Activated B cell treated with CpG ODN at 0.5 μM for 24 hours (primary cell): ENCODE measurements at regions of chr3 and their contacts with region 1.

Region 1: DNA sequence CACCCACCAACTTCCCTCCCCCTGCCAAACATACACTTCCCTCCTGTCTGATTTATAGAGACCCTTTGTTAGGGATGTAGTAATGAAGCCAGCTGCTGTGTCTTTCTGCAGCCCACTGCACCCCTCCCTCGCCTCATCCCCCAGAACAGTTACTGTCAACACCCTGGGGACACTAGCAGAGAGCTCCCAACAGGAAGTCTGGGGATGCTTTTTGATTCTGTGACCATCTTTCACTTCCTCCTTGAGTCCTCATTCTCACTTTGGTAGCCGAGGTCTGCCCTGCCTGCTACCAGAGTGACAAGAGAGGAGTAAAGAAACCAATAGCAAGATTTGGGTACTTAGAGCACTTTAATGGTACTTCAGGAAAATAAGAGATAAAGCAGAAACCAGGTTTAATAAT is 201.6 kb downstream of the SATB1 start:
- DNase-seq: peak; percentile 44
- ATAC-seq: peak; percentile 95
- H3K4me3 Mint-ChIP-seq: peak overlapping the region; percentile 73
- H3K27ac Mint-ChIP-seq: peak overlapping the region; percentile 83
- H3K4me1 Mint-ChIP-seq: peaks cover 75% of the 10 kb centered on the region
- H3K27me3 Mint-ChIP-seq: no peaks in the 10 kb centered on the region
- CTCF ChIP-seq: no peak

Region 2: GRCh38 chr3:18027161-18027939 is 196.2 kb before region 1 on chr3:
- CTCF ChIA-PET with region 1: no interaction called
- POLR2A ChIA-PET with region 1: no interaction called
- intact Hi-C with region 1: no loop called
- DNase-seq: no peak
- ATAC-seq: no peak
- H3K4me3 Mint-ChIP-seq: no peak overlapping the region
- H3K27ac Mint-ChIP-seq: no peak overlapping the region
- H3K4me1 Mint-ChIP-seq: peaks cover 34% of the 10 kb centered on the region
- H3K27me3 Mint-ChIP-seq: peaks cover 4% of the 10 kb centered on the region
- CTCF ChIP-seq: no peak

Region 3: GRCh38 chr3:18127174-18127858 is 96.3 kb before region 1 on chr3:
- CTCF ChIA-PET with region 1: no interaction called
- POLR2A ChIA-PET with region 1: interaction called, 5 read pairs
- intact Hi-C with region 1: loop called (anchors 1 kb)
- DNase-seq: peak; percentile 25
- ATAC-seq: peak; percentile 95
- H3K4me3 Mint-ChIP-seq: peak overlapping the region; percentile 51
- H3K27ac Mint-ChIP-seq: peak overlapping the region; percentile 67
- H3K4me1 Mint-ChIP-seq: peaks cover 30% of the 10 kb centered on the region
- H3K27me3 Mint-ChIP-seq: no peaks in the 10 kb centered on the region
- CTCF ChIP-seq: no peak

Region 4: GRCh38 chr3:18179521-18179920 is 44.1 kb before region 1 on chr3:
- CTCF ChIA-PET with region 1: no interaction called
- POLR2A ChIA-PET with region 1: no interaction called
- intact Hi-C with region 1: no loop called
- DNase-seq: no peak
- ATAC-seq: no peak
- H3K4me3 Mint-ChIP-seq: no peak overlapping the region
- H3K27ac Mint-ChIP-seq: no peak overlapping the region
- H3K4me1 Mint-ChIP-seq: no peaks in the 10 kb centered on the region
- H3K27me3 Mint-ChIP-seq: no peaks in the 10 kb centered on the region
- CTCF ChIP-seq: no peak

Region 5: DNA sequence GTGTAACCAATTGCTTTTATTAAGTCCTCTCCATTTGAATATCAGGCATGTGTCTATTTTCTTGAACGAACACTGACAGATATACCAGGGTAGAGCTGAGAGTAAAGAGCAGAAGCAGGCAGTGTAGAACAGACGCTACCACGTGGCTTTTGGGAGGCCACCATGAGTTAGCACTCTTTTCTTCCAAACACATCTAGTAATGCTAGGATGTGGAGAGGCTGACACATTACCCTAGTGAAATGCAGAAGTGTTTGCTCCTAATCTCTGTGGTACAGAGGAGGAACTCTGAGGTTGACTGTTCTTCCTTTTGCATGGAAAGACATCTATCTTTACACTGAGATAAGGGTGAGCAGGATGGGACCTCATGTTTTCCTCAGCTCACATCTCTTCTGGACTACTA is 14.7 kb before region 1 on chr3:
- CTCF ChIA-PET with region 1: no interaction called
- POLR2A ChIA-PET with region 1: interaction called, 3 read pairs
- intact Hi-C with region 1: loop called (anchors 1 kb)
- DNase-seq: no peak
- ATAC-seq: no peak
- H3K4me3 Mint-ChIP-seq: no peak overlapping the region
- H3K27ac Mint-ChIP-seq: no peak overlapping the region
- H3K4me1 Mint-ChIP-seq: peaks cover 5% of the 10 kb centered on the region
- H3K27me3 Mint-ChIP-seq: no peaks in the 10 kb centered on the region
- CTCF ChIP-seq: no peak

Region 6: GRCh38 chr3:18237251-18238005 is 13.9 kb after region 1 on chr3:
- CTCF ChIA-PET with region 1: interaction called, 3 read pairs
- POLR2A ChIA-PET with region 1: no interaction called
- intact Hi-C with region 1: loop called (anchors 2 kb)
- DNase-seq: no peak
- ATAC-seq: peak; percentile 28
- H3K4me3 Mint-ChIP-seq: no peak overlapping the region
- H3K27ac Mint-ChIP-seq: no peak overlapping the region
- H3K4me1 Mint-ChIP-seq: peaks cover 11% of the 10 kb centered on the region
- H3K27me3 Mint-ChIP-seq: peaks cover 5% of the 10 kb centered on the region
- CTCF ChIP-seq: no peak

Region 7: DNA sequence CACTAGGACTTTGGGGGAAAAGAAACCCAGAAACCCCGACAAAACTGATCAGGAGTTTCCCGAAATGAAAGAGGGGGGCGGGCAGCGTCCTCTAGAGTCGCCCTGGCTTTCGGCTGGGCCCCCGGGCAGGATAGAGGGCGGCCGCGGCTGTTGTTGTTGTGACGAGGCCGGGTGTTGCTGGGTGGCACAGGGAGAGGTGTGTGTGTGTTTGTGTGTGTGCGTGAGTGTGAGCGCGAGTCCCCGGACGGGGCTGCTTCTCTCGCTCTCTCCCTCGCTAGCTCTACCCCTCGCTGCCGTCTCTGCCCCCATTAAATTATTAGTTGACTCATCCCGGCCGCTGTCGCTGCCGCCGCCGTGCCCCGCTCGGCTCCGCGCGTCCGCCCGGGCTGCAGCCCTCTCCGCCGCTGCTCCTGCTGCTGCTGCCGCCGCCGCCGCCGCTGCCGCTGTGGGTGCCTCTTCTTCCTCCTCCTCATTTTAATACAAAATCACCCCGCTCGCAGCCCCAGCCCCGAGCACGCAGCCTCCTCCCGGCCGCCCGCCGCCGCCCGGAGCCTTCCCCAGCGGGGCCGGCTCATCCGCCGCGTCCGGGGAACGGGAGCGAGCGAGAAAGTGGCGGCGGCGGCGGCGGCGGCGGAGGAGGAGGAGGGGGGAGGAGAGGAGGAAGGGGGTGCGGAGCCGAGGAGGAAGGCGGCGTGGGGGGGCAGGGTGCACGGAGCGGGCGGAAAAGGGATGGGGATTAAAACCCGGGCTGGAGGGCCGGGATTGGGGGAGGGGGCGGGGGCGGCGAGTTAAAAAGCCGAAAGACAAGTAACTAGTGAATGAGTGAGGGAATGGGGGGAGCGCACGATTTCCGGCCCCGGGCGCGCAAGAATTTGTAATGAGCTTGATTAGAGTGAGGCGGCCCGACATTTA is 201.4 kb after region 1 on chr3 and contains the start of gene SATB1:
- CTCF ChIA-PET with region 1: no interaction called
- POLR2A ChIA-PET with region 1: no interaction called
- intact Hi-C with region 1: loop called (anchors 10 kb)
- DNase-seq: peak; percentile 68
- ATAC-seq: peak; percentile 49
- H3K4me3 Mint-ChIP-seq: peak within 1 kb of the TSS; percentile 91
- H3K27ac Mint-ChIP-seq: peak within 1 kb of the TSS; percentile 87
- H3K4me1 Mint-ChIP-seq: peaks cover 40% of the 10 kb centered on the region
- H3K27me3 Mint-ChIP-seq: no peaks in the 10 kb centered on the region
- CTCF ChIP-seq: no peak
- total RNA-seq, gene SATB1: 23.0 and 30.8 TPM in 2 replicates

Region 8: DNA sequence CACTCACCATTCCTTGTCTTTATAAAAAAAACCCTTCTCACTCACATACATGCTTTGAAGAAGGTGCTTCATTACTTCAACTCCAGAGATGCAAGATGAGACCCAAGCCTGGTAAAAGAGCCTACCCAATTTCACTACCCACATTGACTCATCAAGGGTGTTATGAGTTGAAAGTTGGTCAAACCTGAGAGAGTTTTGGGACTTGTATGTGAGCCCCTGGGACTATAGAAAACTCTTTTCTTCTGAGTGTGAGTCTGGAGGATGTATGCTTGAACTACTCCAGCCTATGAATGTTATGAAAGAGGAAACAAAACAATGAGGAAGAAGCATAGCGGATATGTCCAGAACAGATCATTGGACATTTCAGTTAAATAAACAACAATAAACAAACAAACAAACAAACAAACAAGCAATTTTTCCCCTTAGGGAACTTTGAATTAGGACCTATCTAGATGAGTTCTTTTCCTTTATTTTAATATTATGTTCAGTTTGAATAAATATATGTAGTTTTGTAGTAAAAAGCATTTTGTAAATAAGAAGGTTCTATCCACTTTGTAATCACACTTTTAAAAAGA is 308.2 kb after region 1 on chr3:
- CTCF ChIA-PET with region 1: no interaction called
- POLR2A ChIA-PET with region 1: no interaction called
- intact Hi-C with region 1: loop called (anchors 10 kb)
- DNase-seq: no peak
- ATAC-seq: peak; percentile 97
- H3K4me3 Mint-ChIP-seq: no peak overlapping the region
- H3K27ac Mint-ChIP-seq: peak overlapping the region; percentile 37
- H3K4me1 Mint-ChIP-seq: peaks cover 49% of the 10 kb centered on the region
- H3K27me3 Mint-ChIP-seq: no peaks in the 10 kb centered on the region
- CTCF ChIP-seq: no peak

Region 9: DNA sequence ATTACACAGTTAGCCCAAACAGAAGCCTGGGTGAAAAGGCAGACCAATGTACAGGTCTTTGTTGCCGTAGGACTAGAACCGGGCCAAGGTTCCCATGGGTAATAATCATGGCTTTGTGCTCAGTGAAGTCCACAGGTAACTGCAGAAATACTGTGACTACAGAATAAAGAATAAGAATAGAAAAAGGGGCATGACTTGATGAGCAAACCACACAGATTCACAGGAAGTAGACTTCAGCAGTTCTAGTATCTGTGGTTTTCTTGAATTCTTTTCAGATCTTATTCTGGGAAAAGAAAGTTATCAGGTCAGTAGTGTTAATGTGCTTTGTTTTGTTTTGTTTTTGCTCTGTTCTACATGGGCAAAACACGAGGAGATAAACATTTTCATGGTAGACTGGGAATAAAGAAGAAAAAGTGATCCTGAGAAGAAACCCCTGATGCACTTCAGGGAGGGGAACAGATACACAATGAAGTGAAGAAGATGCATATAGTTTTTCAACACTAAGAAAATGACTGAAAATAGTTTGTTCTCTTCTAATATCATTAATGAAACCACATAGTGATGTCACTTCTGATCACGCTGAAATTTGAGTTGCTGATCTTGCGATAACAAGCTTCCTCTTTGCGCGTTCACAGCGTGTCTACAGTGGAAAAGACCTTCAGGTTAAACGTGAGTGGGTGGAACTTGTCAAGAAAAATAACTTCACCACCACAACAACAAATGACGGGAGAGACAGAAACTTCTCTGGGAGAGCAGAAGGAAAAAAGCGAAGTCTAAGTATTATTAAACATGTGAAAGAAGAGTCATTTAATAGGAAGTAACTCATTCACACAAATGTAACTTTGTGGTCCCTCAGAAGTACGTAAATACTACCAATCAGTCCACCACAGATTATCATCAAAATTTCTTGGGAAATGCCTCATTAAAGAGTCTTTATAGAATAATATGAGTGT is 517.3 kb after region 1 on chr3:
- CTCF ChIA-PET with region 1: no interaction called
- POLR2A ChIA-PET with region 1: no interaction called
- intact Hi-C with region 1: loop called (anchors 10 kb)
- DNase-seq: no peak
- ATAC-seq: peak; percentile 73
- H3K4me3 Mint-ChIP-seq: peak overlapping the region; percentile 73
- H3K27ac Mint-ChIP-seq: peak overlapping the region; percentile 88
- H3K4me1 Mint-ChIP-seq: peaks cover 68% of the 10 kb centered on the region
- H3K27me3 Mint-ChIP-seq: no peaks in the 10 kb centered on the region
- CTCF ChIP-seq: no peak